Mammary epithelial cell (primary cell): ENCODE measurements at regions of chr12 and their contacts with region 1.

Region 1: DNA sequence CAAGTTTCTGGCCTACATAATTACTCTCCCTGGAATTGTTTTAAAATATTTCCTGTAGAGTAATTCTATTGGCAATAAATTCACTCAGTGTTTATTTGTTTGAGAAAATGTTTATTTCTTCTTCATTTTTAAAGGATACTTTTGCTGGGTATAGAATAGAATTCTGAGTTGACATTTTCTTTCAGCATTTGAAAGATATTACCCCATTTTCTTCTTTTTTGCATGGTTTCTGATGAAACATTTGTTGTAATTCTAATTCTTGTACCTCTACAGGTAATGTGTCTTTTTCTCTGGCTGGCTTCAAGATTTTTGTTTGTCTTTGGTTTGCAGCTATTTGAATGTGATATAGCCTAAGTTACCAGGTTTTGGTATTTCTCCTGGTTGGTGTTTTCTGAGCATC is 25.1 kb upstream of the ATF7IP start:
- DNase-seq: no peak
- H3K4me3 ChIP-seq: no peak overlapping the region
- H3K27ac ChIP-seq: no peak overlapping the region
- H3K4me1 ChIP-seq: no peaks in the 10 kb centered on the region
- H3K27me3 ChIP-seq: no peaks in the 10 kb centered on the region
- CTCF ChIP-seq: no peak

Region 2: GRCh38 chr12:14303661-14304155 is 36.7 kb before region 1 on chr12:
- CTCF ChIA-PET with region 1: no interaction called
- dilution Hi-C with region 1: loop called (anchors 5 kb)
- in situ Hi-C with region 1: no loop called
- intact Hi-C with region 1: no loop called
- DNase-seq: no peak
- H3K4me3 ChIP-seq: no peak overlapping the region
- H3K27ac ChIP-seq: no peak overlapping the region
- H3K4me1 ChIP-seq: no peaks in the 10 kb centered on the region
- H3K27me3 ChIP-seq: no peaks in the 10 kb centered on the region
- CTCF ChIP-seq: no peak